Pancreas (tissue), 10 donors: ENCODE measurements at regions of chr2 and their contacts with region 1.

Region 1: DNA sequence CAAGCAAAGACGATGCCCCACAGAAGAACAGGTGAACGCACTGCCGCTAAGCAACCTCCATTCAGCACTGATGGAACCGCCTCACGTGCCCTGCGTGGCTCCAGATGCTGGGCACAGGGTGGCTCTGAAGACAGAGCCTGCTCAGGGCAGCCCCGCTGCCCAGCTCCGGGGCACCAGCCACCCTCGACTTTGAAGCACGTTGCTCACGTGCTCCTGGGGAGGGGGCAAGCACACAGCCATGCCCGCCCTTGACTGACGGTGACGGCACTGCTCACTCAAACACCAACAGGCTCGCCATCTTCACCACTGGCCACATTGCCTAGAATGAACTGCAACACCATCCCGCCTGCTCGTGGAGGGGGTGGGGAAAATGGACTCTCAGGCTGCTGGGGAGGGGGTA is 251.3 kb downstream of the HDAC4 start:
- DNase-seq: peak in 2 of 6 donors; percentile 32 to 48
- ATAC-seq: no peak
- H3K4me3 ChIP-seq: no peak overlapping the region
- H3K27ac ChIP-seq: no peak overlapping the region
- H3K4me1 ChIP-seq: no peaks in the 10 kb centered on the region
- H3K27me3 ChIP-seq: no peaks in the 10 kb centered on the region
- CTCF ChIP-seq: no peak

Region 2: DNA sequence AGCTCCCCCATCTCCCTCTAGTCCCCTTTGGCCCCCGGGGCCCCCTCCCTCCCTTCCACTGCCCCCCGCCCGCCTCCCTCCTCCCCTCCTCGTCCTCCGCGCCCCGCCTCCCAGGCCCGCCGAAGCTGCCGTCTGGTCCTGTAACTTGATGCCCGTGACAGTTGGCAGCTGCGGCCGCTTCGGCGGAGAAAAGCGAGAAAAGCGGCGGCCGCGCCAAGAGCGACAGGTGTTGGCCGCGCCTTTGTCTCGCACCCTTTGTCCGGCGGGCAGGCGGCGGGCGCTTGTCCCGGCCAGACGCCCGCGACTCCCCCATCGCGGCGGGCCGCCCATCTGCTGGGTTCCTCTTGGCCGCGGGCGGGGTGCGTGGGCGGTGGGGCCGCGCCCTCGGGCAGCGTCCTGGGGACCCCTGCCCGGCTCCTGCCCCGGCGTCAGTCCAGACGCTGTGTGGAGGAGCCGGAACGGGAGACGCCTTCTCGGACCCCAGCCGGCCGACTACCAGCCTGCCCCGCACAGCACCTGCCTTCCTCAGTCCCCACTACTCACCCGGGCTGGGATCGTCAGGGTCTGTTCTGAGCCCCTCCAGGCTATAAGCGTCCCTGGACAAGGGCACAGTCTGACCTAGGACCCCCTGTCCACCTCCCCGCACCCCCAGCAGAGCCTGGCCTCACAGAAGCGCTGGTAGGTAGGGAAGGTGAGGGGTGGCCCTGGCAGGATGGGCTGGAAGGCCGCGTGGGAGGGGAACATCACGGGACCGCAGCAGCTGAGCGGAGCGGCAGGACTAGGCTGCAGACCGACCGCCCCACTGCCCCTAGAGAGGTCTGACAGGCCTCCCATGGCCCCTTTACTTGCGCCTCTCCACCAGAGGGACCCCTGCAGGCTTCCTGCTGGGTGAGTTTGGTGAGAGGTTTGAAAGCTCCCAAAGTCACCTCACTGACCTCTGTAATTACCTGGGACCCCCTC is 908.5 kb before region 1 on chr2:
- intact Hi-C with region 1: no loop called
- DNase-seq: peak; percentile 85 to 95 (median 92)
- ATAC-seq: peak; percentile 69 to 79 (median 74)
- H3K4me3 ChIP-seq: peak overlapping the region in 3 of 4 donors; percentile 64 to 77 (median 66)
- H3K27ac ChIP-seq: peak overlapping the region; percentile 38 to 79 (median 68)
- H3K4me1 ChIP-seq: peaks cover 15 to 33% (median 17%) of the 10 kb centered on the region in 3 donors
- H3K27me3 ChIP-seq: no peaks in the 10 kb centered on the region
- CTCF ChIP-seq: no peak

Region 3: GRCh38 chr2:239288951-239289511 is 139.5 kb after region 1 on chr2:
- intact Hi-C with region 1: no loop called
- DNase-seq: peak in 1 of 6 donors; percentile 22
- ATAC-seq: no peak
- H3K4me3 ChIP-seq: no peak overlapping the region
- H3K27ac ChIP-seq: no peak overlapping the region
- H3K4me1 ChIP-seq: peaks cover 0 to 21% (median 0%) of the 10 kb centered on the region in 3 donors
- H3K27me3 ChIP-seq: no peaks in the 10 kb centered on the region
- CTCF ChIP-seq: no peak

Region 4: DNA sequence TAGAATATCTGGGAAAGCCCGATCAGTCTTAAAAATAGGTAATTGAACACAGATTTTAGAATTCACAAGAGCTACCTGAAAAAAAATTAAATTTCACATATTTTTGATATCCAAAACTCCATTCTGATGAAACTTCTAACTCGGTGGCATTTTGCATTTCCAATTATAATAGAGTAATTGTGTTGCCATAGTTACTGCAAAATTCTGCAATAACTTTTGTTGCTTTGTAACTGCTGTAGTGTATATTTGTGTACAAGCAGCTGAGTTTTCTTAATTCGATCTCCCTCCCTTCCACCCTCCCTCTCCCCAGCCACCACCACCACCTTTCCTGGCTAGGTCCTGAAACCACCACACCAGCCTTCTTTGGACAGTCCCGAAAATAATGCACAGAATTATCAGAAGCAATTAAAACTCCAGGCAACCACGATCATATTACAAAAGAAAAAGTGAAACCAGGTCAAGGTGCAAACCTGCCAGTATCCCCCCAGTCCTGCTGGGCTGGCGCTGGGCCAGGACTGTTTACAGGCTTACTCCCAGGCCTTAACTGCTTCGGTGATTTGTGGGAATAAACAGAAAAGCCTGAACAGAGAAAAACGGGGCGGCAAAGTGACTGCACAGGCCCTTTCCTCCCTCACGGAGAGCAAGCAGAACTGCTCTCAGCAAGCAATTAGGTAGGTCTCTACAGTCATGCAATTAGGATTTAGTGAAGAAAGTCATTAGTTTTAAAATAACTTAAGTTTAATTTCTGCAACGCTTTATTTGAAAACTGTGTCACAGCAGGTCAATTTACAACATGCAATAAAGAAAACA is 249.8 kb after region 1 on chr2:
- intact Hi-C with region 1: loop called in 1 of 3 experiments (anchors 5 kb)
- DNase-seq: peak in 3 of 6 donors; percentile 43 to 79 (median 65)
- ATAC-seq: no peak
- H3K4me3 ChIP-seq: peak overlapping the region; percentile 10 to 58 (median 46)
- H3K27ac ChIP-seq: peak overlapping the region in 1 of 4 donors; percentile 17
- H3K4me1 ChIP-seq: peaks cover 0 to 7% (median 5%) of the 10 kb centered on the region in 3 donors
- H3K27me3 ChIP-seq: no peaks in the 10 kb centered on the region
- CTCF ChIP-seq: no peak